ENCODE measurements at regions of chr7 and their contacts with region 1.

Region 1: GRCh38 chr7:128387216-128388144 is 22.3 kb downstream of the IMPDH1 start:
- DNase-seq: peak; percentile 42 to 69 (median 52)
- H3K4me3 ChIP-seq: no peak overlapping the region
- H3K4me3 Mint-ChIP-seq: no peak overlapping the region
- H3K27ac ChIP-seq: no peak overlapping the region
- H3K27ac Mint-ChIP-seq: peak overlapping the region in 1 of 8 donors; percentile 24
- H3K4me1 ChIP-seq: no peaks in the 10 kb centered on the region
- H3K4me1 Mint-ChIP-seq: peaks cover 0 to 4% (median 0%) of the 10 kb centered on the region in 3 donors
- H3K27me3 ChIP-seq: no peaks in the 10 kb centered on the region
- H3K27me3 Mint-ChIP-seq: no peaks in the 10 kb centered on the region

Region 2: DNA sequence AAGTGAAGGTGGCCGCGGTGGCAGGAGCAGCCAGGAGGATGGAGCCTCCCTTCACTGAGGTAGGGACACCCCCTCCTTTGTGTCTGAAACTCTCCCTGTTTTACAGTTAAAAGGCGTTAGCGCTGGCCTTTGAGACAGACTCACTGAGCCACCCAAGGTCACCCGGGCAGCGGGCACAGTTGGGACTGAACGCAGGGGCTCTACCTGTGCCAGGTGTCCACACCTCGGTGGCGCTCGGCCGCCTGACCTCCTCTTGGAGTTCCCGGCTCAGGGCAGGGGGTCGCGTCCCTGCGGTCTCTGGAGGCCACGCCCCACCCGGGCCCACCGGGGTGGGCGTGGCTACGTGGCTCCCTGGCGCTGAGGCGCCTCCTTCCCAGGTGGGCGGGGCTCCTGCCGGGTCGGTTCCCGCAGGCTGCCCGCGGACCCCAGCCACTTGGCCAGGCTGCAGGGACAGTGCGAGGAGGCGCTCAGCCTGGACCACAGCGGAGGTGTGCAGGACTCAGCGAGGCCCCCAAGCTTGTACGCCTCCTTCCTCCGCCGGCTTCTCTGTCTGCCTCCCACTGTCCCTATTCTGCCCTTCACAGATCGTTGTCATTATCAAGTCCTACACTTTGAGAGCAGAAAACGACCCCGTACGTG is 186.3 kb before region 1 on chr7:
- CTCF ChIA-PET with region 1: no interaction called
- POLR2A ChIA-PET with region 1: no interaction called
- DNase-seq: no peak
- H3K4me3 ChIP-seq: peak overlapping the region; percentile 27
- H3K4me3 Mint-ChIP-seq: peak overlapping the region; percentile 49 to 87 (median 83)
- H3K27ac ChIP-seq: no peak overlapping the region
- H3K27ac Mint-ChIP-seq: peak overlapping the region in 1 of 8 donors; percentile 51
- H3K4me1 ChIP-seq: peaks cover 10% of the 10 kb centered on the region
- H3K4me1 Mint-ChIP-seq: peaks cover 11 to 17% (median 16%) of the 10 kb centered on the region in 3 donors
- H3K27me3 ChIP-seq: peaks cover 26% of the 10 kb centered on the region
- H3K27me3 Mint-ChIP-seq: peaks cover 18 to 51% of the 10 kb centered on the region in 2 donors

Region 3: DNA sequence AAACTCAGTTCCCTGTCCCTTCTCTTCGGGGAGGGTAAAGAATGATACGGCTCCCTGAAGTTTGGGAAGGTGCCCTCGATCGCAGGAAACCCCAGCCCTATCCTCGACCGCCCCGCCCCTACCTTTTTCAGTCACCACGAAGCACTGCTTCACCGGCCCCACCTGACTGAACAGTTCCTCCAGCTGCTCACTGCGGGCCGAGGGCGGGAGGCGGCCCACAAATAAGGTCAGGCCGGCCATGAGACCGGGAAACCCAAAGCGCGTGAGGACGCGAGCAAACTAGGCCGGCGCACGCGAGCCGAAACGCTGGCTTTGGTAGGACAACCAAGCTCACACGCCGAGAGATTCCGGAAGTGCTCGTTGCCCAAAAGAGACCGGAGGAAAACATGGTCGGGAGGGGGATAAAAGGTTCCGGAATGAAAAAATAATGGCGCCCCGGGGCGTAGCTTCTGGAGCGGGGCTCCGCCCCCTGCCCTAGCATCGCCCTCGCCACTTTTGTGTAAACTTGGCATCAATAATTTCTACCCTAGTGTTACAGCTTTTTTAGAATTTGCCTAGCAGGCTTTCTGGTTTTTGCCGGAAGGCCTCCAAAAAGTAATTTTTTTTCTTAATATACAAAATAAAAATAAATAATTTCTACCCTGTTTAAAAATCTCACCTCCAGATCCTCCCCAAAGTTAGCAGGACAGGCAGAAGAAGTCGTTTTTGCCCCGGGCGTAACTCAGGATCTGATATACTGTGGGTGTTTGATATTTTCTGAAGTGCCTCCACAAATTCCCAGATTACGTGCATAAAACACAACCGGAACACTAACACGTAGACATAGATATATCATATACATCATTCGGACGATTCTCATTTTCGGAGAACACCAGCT is 43.7 kb before region 1 on chr7 and contains the start of gene RBM28:
- CTCF ChIA-PET with region 1: interaction called, 53 read pairs
- POLR2A ChIA-PET with region 1: no interaction called
- DNase-seq: peak; percentile 71 to 90 (median 86)
- H3K4me3 ChIP-seq: peak within 1 kb of the TSS; percentile 64
- H3K4me3 Mint-ChIP-seq: peak within 1 kb of the TSS; percentile 93 to 99 (median 96)
- H3K27ac ChIP-seq: peak within 1 kb of the TSS; percentile 76
- H3K27ac Mint-ChIP-seq: peak within 1 kb of the TSS; percentile 81 to 97 (median 96)
- H3K4me1 ChIP-seq: peaks cover 26% of the 10 kb centered on the region
- H3K4me1 Mint-ChIP-seq: peaks cover 31 to 43% (median 33%) of the 10 kb centered on the region in 3 donors
- H3K27me3 ChIP-seq: no peaks in the 10 kb centered on the region
- H3K27me3 Mint-ChIP-seq: peaks cover 0 to 8% of the 10 kb centered on the region in 2 donors
- total RNA-seq, gene RBM28: 77.7 to 77.8 TPM

Region 4: DNA sequence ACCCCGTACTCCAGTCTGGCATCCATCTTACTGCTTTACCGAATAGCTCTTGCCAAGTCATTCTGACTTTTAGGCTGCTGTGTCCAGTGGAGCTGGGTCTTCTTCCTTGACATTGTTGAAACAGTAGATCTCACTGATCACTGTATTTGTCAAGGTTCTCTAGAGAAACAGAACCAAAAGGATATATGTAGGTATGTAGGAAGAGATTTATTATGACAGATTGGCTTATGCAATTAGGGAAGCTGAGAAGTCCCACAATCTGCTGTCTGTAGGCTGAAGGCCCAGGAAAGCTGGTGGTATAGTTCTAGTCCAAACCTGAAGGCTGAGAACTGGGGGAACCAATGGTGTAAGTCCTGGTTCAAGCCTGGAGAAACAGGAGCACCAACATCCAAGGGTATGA is 13.9 kb before region 1 on chr7:
- CTCF ChIA-PET with region 1: interaction called, 13 read pairs
- POLR2A ChIA-PET with region 1: no interaction called
- DNase-seq: no peak
- H3K4me3 ChIP-seq: no peak overlapping the region
- H3K4me3 Mint-ChIP-seq: no peak overlapping the region
- H3K27ac ChIP-seq: no peak overlapping the region
- H3K27ac Mint-ChIP-seq: peak overlapping the region in 1 of 8 donors; percentile 29
- H3K4me1 ChIP-seq: no peaks in the 10 kb centered on the region
- H3K4me1 Mint-ChIP-seq: no peaks in the 10 kb centered on the region
- H3K27me3 ChIP-seq: no peaks in the 10 kb centered on the region
- H3K27me3 Mint-ChIP-seq: peaks cover 3 to 7% of the 10 kb centered on the region in 2 donors

Region 5: DNA sequence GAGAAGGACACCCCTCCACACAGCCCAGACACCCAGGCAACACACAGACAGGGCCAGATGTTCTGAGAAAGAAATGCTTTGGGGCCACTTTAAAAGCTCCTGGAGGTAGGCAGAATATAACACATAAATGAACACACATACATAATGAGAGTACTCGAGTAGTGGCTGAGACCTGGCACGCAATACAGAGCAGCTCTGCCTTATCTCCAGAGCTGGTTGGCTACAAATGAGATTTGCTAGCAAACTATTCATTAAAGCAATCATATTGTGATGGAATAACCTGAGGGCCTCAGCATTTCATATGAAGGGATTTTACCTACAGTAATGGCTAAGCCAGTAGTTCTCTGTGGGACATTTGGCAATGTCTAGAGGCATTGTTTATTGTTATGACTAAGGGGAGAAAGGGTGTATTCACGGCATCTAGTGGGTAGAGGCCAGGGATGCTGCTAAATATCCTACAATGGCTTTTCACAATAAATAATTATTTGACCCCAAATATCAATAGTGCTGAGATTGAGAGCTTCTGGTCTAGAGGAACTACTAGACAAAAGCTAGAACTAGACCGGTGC is 27.8 kb after region 1 on chr7:
- CTCF ChIA-PET with region 1: interaction called, 13 read pairs
- POLR2A ChIA-PET with region 1: no interaction called
- DNase-seq: no peak
- H3K4me3 ChIP-seq: no peak overlapping the region
- H3K4me3 Mint-ChIP-seq: no peak overlapping the region
- H3K27ac ChIP-seq: no peak overlapping the region
- H3K27ac Mint-ChIP-seq: no peak overlapping the region
- H3K4me1 ChIP-seq: peaks cover 3% of the 10 kb centered on the region
- H3K4me1 Mint-ChIP-seq: peaks cover 2 to 3% (median 3%) of the 10 kb centered on the region in 3 donors
- H3K27me3 ChIP-seq: no peaks in the 10 kb centered on the region
- H3K27me3 Mint-ChIP-seq: peaks cover 2 to 3% of the 10 kb centered on the region in 2 donors

Region 6: GRCh38 chr7:129801882-129802473 is 1414.5 kb after region 1 on chr7:
- CTCF ChIA-PET with region 1: no interaction called
- POLR2A ChIA-PET with region 1: no interaction called
- DNase-seq: peak in 1 of 5 donors; percentile 15
- H3K4me3 ChIP-seq: no peak overlapping the region
- H3K4me3 Mint-ChIP-seq: no peak overlapping the region
- H3K27ac ChIP-seq: no peak overlapping the region
- H3K27ac Mint-ChIP-seq: no peak overlapping the region
- H3K4me1 ChIP-seq: no peaks in the 10 kb centered on the region
- H3K4me1 Mint-ChIP-seq: no peaks in the 10 kb centered on the region
- H3K27me3 ChIP-seq: no peaks in the 10 kb centered on the region
- H3K27me3 Mint-ChIP-seq: peaks cover 7 to 16% of the 10 kb centered on the region in 2 donors

Measured in CD8-positive, alpha-beta memory T cell (primary cell).